ENCODE measurements at regions of chr1 and their contacts with region 1.

Region 1: DNA sequence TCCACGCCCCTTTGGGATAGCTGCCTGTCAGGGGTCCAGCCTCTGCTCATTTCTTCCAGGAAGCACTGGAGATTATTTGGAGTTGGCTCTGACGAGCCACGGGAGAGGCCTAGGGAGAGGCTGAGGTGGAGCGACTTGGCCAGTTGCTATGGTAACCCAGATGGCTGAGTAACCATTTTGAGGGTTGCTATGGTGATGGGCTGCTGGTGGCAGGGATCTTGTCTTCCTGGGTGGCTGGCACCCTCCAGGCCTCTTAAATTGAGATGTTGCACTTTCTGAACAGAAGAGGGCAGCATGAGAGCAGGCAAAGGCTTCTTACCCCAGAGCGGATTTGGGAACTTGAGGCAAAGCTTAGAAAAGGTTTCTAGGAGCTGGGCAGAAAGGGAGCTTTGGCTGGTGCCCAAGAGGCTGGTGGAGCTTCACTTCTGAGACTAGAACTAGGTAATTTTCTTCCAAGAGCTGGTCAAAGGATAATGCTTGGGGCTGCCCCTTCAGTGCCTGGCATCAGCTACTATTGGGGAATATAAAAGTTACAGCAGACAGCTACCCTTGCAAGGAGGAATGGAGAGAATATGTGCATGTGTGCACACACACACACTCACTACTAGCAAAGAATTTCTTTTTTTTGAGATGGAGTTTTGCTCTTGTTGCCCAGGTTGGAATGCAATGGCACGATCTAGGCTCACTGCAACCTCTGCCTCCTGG is 72.5 kb downstream of the NDUFS5 start:
- DNase-seq: peak; percentile 81
- CTCF ChIP-seq: peak; percentile 81

Region 2: DNA sequence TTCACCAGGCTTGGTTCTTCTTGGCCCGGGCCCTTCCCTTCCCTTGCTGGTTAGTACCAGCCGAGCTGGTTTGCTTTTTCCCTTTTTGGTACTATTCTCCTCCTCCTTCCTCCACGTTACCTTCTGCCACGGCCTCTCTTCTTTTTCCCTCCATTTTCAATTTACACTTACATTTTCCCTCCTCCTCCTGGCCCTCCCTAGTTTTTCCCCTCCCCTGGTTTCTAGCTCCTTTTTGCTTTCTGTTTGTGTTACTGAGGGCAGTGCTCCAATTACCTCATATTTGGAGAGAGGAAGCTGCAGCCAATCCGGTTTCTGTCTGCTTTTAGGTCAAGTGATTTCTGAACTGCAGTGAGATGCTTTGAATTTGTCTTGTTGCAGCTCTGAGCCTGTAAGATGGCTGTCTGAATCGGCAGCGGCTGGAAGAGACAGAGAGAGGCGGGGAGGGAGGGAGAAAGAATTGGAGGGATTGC is 169.4 kb after region 1 on chr1:
- in situ Hi-C with region 1: loop called (anchors 10 kb)
- DNase-seq: peak; percentile 59
- CTCF ChIP-seq: no peak

Region 3: DNA sequence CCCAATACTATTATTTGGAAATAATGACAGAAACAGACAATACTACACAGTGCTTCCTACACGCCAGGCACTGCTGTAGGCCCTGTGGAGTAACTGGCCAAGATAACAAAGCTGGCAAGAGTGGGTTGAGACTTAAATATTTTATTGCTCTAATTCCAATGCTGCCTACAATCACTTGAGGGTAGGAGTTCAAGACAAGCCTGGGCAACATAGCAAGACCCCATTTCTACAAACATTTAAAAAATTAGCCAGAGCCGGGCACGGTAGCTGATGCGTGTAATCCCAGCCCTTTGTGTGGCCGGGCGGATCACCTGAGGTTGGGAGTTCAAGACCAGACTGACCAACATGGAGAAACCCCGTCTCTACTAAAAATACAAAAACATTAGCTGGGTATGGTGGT is 487.2 kb after region 1 on chr1:
- in situ Hi-C with region 1: no loop called
- DNase-seq: no peak
- CTCF ChIP-seq: no peak

Region 4: GRCh38 chr1:39720094-39720999 is 621.6 kb after region 1 on chr1:
- in situ Hi-C with region 1: loop called (anchors 25 kb)
- DNase-seq: peak; percentile 46
- CTCF ChIP-seq: peak; percentile 35

Measured in GM13976 (cell line).